ENCODE measurements at regions of chr14 and their contacts with region 1.

Region 1: GRCh38 chr14:23631702-23632460 is 4.3 kb upstream of the DHRS2 start:
- DNase-seq: peak; percentile 70
- ATAC-seq: peak; percentile 95

Region 2: DNA sequence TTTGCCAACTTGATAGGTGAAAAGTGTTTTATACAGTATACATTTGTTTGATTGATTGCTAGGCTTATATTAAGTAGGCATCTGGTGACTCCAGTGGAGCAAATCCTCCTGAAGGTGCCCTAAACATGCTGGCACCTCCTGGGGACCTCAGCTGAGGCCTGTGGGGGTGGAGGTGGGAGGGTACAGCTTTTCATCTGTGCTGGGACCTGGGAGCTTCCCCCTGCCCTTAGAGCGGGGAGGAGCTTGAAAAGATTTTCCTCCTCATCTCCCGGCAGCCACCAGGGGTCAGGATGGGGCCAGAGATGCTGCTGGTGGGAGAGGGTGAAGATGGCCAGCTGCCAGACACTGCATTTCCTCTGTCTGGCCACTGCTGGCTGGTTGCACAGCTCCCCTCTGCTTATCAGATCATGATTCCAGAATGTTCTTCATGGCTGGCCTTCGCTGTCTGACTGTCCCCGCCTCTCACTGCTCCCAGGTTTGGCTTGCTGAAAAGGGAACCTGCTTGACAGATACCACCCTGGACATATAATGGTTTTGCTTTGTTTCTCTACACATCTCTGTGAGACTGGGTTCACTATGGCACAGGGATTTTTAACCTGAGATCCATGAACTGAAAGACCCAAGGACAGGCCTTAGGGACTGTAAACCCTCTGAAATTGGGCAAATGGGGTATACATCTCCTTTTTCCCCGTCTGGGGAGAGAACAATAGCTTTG is 42.8 kb before region 1 on chr14:
- intact Hi-C with region 1: loop called (anchors 5 kb)
- DNase-seq: peak; percentile 90
- ATAC-seq: peak; percentile 95

Region 3: DNA sequence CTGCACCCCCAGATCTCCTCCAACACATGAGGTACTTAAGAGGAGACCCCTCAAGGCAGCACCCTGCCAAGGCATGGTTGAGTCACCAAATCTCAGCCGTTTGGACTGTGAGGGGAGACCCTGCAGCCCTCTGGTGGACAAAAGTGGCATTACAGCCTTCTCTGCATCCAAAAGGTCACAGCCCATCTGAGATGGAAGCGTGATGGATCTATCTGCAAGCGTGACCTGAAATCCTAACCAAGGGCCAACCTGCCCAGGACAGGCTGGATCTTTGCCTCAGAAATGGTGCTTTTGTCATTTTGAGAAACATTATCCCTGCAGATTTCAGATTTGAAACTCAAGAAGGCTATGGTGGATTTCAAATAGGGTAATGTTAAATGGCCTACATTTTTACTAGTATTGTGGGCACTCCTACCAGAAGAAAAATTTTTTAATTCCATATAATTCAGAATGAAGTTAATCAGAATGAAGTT is 298.0 kb after region 1 on chr14:
- intact Hi-C with region 1: loop called (anchors 10 kb)
- DNase-seq: peak; percentile 73
- ATAC-seq: peak; percentile 90